ENCODE measurements at regions of chr6 and their contacts with region 1.

Region 1: DNA sequence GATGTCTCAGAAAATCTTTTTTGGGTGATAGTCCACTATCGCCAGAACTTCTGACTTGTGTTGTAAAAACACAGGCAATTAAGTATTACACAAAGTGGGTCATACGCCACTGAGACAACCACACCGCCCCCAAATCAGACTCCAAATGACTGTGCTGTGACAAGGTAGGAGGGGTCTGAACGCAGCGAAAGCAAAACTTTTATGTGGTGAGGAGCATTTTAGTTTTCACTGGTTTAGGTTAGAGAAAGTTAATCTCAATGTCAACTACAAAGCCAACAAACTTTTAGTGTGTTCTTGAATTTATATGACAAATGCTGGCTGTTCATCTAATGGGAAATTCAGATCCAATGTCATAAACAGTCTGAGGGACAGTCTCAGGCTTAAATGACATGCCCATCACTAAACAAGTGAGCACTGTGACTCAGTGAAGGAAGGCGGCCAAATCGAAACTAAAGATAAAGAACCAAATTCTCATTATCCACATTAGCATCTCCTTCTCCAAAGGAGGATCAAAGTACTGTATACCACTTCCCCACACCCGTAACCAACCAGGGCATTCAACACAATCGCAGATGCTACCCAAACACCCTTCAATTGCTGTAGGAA is 186.7 kb downstream of the GJA10 start:
- DNase-seq: peak; percentile 76
- H3K4me3 Mint-ChIP-seq: peak overlapping the region; percentile 88
- H3K27ac Mint-ChIP-seq: peak overlapping the region; percentile 95
- H3K4me1 Mint-ChIP-seq: peaks cover 96% of the 10 kb centered on the region
- H3K27me3 Mint-ChIP-seq: no peaks in the 10 kb centered on the region

Region 2: GRCh38 chr6:89829591-89830385 is 251.2 kb before region 1 on chr6 and contains the start of gene CASP8AP2:
- intact Hi-C with region 1: loop called (anchors 2 kb)
- DNase-seq: peak; percentile 93
- H3K4me3 Mint-ChIP-seq: peak within 1 kb of the TSS; percentile 97
- H3K27ac Mint-ChIP-seq: peak within 1 kb of the TSS; percentile 91
- H3K4me1 Mint-ChIP-seq: peaks cover 23% of the 10 kb centered on the region
- H3K27me3 Mint-ChIP-seq: no peaks in the 10 kb centered on the region
- total RNA-seq, gene CASP8AP2: 38.3 and 40.2 TPM in 2 replicates

Region 3: GRCh38 chr6:90008908-90009501 is 72.0 kb before region 1 on chr6:
- intact Hi-C with region 1: loop called (anchors 1 kb)
- DNase-seq: no peak
- H3K4me3 Mint-ChIP-seq: peak overlapping the region; percentile 37
- H3K27ac Mint-ChIP-seq: peak overlapping the region; percentile 69
- H3K4me1 Mint-ChIP-seq: peaks cover 38% of the 10 kb centered on the region
- H3K27me3 Mint-ChIP-seq: no peaks in the 10 kb centered on the region

Region 4: DNA sequence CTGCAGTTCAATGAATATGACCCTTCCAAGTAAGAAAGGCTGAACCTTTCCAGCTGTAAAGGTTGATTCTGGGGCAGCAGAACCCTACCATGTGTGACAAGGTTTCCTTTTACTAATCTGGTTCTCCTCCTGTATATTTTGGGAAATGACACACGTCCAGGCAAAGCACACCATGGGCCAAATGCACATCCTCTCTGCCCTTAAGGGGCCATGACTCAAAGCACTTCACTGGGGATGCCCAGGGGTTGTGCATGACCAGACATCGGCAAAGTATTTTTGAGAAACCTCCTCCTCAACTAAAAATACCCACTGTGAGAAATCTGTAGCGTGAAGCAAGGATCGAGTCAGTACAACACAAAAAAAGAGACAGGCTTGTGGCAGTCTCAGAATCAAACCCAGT is 41.0 kb after region 1 on chr6:
- intact Hi-C with region 1: loop called (anchors 5 kb)
- DNase-seq: no peak
- H3K4me3 Mint-ChIP-seq: peak overlapping the region; percentile 24
- H3K27ac Mint-ChIP-seq: peak overlapping the region; percentile 84
- H3K4me1 Mint-ChIP-seq: peaks cover 61% of the 10 kb centered on the region
- H3K27me3 Mint-ChIP-seq: peaks cover 2% of the 10 kb centered on the region

Region 5: DNA sequence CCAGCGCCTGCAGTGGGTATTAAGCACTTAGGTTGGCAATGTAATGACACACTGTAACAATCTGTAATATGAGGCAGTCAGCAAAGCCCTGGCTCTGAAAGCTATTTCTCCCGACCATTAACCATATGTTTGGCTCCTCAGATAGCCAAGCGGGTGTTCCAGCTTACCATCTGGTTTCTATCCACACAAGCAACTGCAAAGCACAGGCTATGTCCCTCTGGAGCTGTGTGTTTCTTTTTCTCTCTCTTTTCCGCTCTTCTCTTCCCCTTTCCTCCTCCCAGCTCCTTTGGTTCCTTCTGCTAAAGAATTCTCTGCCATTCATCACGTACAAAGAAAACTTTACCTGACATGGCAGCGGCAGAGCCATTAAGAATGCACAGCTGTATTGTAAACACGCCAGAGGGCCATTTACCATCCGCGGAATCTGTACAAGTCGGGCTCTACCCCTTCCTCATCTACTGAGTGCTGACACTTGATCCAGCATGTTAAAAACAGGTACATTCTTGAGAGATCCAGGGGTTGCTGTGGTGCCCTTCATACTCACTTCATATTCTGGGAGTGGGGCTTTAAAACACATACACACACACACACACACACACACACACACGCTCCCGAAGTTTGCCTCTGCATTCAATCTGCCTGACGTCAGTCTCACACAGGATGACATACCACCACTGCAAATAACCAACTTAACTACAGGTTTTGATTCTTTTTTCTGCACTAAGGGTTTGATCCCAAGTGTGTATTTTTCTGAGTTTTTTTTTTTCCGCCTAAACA is 138.4 kb after region 1 on chr6:
- intact Hi-C with region 1: loop called (anchors 1 kb)
- DNase-seq: no peak
- H3K4me3 Mint-ChIP-seq: no peak overlapping the region
- H3K27ac Mint-ChIP-seq: no peak overlapping the region
- H3K4me1 Mint-ChIP-seq: no peaks in the 10 kb centered on the region
- H3K27me3 Mint-ChIP-seq: no peaks in the 10 kb centered on the region

Region 6: GRCh38 chr6:90296346-90297114 is 215.6 kb after region 1 on chr6 and contains the start of gene BACH2:
- intact Hi-C with region 1: loop called (anchors 1 kb)
- DNase-seq: peak; percentile 88
- H3K4me3 Mint-ChIP-seq: peak within 1 kb of the TSS; percentile 93
- H3K27ac Mint-ChIP-seq: peak within 1 kb of the TSS; percentile 95
- H3K4me1 Mint-ChIP-seq: peaks cover 39% of the 10 kb centered on the region
- H3K27me3 Mint-ChIP-seq: peaks cover 21% of the 10 kb centered on the region
- total RNA-seq, gene BACH2: 68.1 and 71.2 TPM in 2 replicates

Region 7: DNA sequence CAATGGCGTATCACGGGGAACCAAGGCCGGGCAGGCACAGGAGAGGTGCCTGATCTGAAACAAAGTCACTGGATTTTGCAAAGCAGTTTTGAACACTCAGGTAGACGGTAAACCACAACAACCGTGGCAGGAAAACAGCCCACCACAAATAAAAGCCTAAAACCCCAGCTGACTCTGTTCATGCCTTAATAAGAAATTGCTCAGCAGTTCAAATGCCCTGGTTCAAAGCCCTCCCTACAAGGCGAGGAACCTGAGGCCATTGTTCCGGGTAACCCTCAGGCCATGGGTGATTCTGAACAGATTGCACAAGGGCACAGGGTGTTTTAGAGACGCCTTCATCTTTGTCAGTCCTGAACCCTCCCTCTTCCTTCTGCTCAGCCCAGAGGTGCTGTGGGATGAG is 391.8 kb after region 1 on chr6:
- intact Hi-C with region 1: loop called (anchors 1 kb)
- DNase-seq: peak; percentile 52
- H3K4me3 Mint-ChIP-seq: peak overlapping the region; percentile 68
- H3K27ac Mint-ChIP-seq: peak overlapping the region; percentile 92
- H3K4me1 Mint-ChIP-seq: peaks cover 100% of the 10 kb centered on the region
- H3K27me3 Mint-ChIP-seq: no peaks in the 10 kb centered on the region

Measured in activated T-helper 1 cell treated with anti-CD3 and anti-CD28 coated beads, Interleukin-12 subunit alpha, Interleukin-12 subunit beta, Interleukin-2, Interleukin-4 antibody, amounts not matched to agents 30 ng/mL and 10 ng/mL and 1 ng/mL, durations not matched to agents 14 hours and 24 hours and 36 hours (primary cell).